ENCODE measurements at regions of chr3 and their contacts with region 1.

Region 1: GRCh38 chr3:73848173-73848906 is 223.6 kb upstream of the PDZRN3 start:
- DNase-seq: no peak
- H3K4me3 ChIP-seq: no peak overlapping the region
- H3K27ac ChIP-seq: no peak overlapping the region
- H3K4me1 ChIP-seq: peaks cover 0 to 3% (median 0%) of the 10 kb centered on the region in 4 donors
- H3K27me3 ChIP-seq: no peaks in the 10 kb centered on the region
- CTCF ChIP-seq: peak; percentile 69 to 74

Region 2: GRCh38 chr3:73624821-73625665 is 223.3 kb before region 1 on chr3 and contains the start of gene PDZRN3:
- intact Hi-C with region 1: loop called (anchors 5 kb)
- DNase-seq: peak in 1 of 2 donors; percentile 40
- H3K4me3 ChIP-seq: peak within 1 kb of the TSS; percentile 80 to 86
- H3K27ac ChIP-seq: peak within 1 kb of the TSS; percentile 88 to 93
- H3K4me1 ChIP-seq: peaks cover 0 to 31% (median 21%) of the 10 kb centered on the region in 4 donors
- H3K27me3 ChIP-seq: no peaks in the 10 kb centered on the region
- CTCF ChIP-seq: no peak